H1 (cell line): ENCODE measurements at regions of chr4 and their contacts with region 1.

Region 1: GRCh38 chr4:42519803-42520417 is 122.6 kb downstream of the SHISA3 start:
- DNase-seq: peak in 1 of 2 experiments; percentile 65
- H3K4me3 ChIP-seq: no peak overlapping the region
- H3K27ac ChIP-seq: no peak overlapping the region
- H3K4me1 ChIP-seq: no peaks in the 10 kb centered on the region
- H3K27me3 ChIP-seq: peaks cover 0 to 4% (median under 1%) of the 10 kb centered on the region in 4 experiments; a peak in 2 of 7 replicates
- CTCF ChIP-seq: peak in 2 of 3 experiments; percentile 55 to 61; a peak in 2 of 4 replicates
- EP300 ChIP-seq: no peak
- POLR2A ChIP-seq: no peak
- RAD21 ChIP-seq: peak; percentile 83 to 86

Region 2: DNA sequence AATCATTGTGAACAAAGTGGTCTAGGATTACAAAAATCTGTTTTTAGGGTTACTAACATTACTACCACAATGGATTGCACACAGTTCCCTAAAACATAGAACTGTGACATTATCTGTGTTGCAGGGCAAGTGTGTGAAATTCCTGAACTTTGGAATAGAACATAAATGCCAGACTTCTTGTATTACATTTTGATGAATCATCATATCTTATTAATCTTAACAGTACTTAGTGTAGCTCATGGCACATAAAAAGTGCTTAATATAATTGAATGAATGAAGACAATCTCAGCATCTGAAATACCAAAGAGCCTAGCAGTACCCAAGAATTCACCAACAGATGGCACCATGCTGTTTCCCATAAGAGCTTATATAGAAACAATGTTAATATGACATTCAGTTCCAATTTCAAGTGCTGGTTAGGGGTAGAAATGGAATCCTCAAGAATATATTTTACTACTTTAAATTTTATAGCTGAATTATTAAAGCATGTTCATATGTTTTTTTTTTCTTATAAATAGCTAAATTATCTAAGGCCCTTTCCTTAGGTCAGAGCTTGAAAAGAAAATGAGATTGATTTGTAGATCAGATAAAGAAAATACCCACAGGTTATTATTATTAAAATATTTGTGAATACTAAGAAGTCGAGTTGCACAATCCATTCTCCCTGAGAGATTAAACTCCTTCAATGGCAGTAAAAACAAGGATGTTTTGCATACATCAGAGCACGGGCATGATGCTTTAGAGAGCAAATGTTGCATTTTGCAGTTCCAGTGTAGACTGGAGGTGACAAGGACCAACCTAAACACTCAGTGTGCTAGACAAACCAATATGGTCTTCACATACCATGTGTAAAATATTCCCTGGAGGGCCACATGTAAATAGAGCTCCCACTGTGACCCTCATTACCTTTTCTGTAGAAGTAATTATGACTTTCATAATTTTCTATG is 148.3 kb before region 1 on chr4:
- CTCF ChIA-PET with region 1: interaction called, 82 read pairs
- POLR2A ChIA-PET with region 1: interaction called, 3 read pairs
- DNase-seq: no peak
- H3K4me3 ChIP-seq: no peak overlapping the region
- H3K27ac ChIP-seq: no peak overlapping the region
- H3K4me1 ChIP-seq: no peaks in the 10 kb centered on the region; a peak in 1 of 7 replicates
- H3K27me3 ChIP-seq: 0 out of 7 replicates have a peak, but pooled peaks cover 0 to 2% (median 0%) of the 10 kb centered on the region in 4 experiments
- CTCF ChIP-seq: peak in 2 of 3 experiments; percentile 6 to 40; a peak in 2 of 4 replicates
- EP300 ChIP-seq: no peak
- POLR2A ChIP-seq: no peak
- RAD21 ChIP-seq: peak; percentile 59 to 62

Region 3: GRCh38 chr4:42390622-42391354 is 129.1 kb before region 1 on chr4:
- CTCF ChIA-PET with region 1: interaction called, 135 read pairs
- POLR2A ChIA-PET with region 1: interaction called, 4 read pairs
- DNase-seq: no peak
- H3K4me3 ChIP-seq: no peak overlapping the region
- H3K27ac ChIP-seq: no peak overlapping the region
- H3K4me1 ChIP-seq: peaks cover 0 to 11% (median 4%) of the 10 kb centered on the region in 4 experiments; a peak in 3 of 7 replicates
- H3K27me3 ChIP-seq: peaks cover 4 to 8% (median 6%) of the 10 kb centered on the region in 4 experiments
- CTCF ChIP-seq: no peak
- EP300 ChIP-seq: no peak
- POLR2A ChIP-seq: no peak
- RAD21 ChIP-seq: no peak

Region 4: DNA sequence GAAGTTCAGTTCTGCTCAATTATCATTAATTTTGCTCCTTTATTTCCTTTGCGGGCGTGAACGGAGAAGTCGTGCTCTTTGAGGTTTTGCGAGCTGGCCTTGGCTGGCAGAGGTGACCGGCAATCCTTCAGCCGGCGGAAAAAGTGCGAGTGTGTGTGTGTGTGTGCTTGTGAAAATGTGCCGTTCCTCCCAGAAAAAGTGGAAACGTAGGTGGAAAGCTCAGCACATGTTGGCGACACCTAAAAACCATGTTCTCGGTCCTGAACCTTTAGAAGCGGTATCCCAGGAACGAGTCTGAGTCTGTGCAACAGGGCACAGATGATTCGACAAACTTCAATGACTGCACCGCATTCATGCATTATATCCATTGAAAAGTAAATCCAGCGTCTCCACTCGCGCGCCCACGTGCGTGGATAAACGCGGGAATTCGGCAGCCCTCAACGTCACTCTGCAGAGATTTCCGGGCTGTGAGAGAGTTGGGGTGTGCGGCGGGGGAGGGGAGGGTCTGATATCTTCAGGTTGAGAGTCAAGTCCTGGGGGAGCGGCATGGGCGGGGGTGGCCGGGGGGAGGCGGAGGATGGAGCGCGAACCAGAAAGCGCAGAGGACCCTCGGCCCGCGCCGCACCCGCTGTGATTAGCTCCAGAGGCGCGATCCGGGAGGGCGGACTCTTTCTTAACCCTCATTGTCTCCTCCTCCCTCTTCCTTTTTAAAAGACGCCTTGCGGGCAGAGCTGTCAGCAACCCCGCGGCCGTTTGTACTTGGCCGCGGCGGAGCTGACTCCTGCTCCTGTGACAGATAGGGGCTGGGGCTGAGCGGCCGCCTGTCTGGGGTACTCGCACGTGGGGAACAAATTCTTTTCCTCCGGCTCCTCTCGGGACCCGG is 122.9 kb before region 1 on chr4 and contains the start of gene SHISA3:
- CTCF ChIA-PET with region 1: interaction called, 135 read pairs
- POLR2A ChIA-PET with region 1: interaction called, 3 read pairs
- DNase-seq: peak in 1 of 2 experiments; percentile 75
- H3K4me3 ChIP-seq: peak within 1 kb of the TSS; percentile 45 to 66 (median 58)
- H3K27ac ChIP-seq: no peak within 1 kb of the TSS
- H3K4me1 ChIP-seq: peaks cover 4 to 22% (median 12%) of the 10 kb centered on the region in 4 experiments; a peak in 6 of 7 replicates
- H3K27me3 ChIP-seq: peaks cover 19 to 65% (median 57%) of the 10 kb centered on the region in 4 experiments
- CTCF ChIP-seq: no peak
- EP300 ChIP-seq: no peak
- POLR2A ChIP-seq: no peak
- RAD21 ChIP-seq: no peak
- total RNA-seq, gene SHISA3: 2.0 and 2.2 TPM in 2 replicates

Region 5: GRCh38 chr4:42420140-42420539 is 99.8 kb before region 1 on chr4:
- CTCF ChIA-PET with region 1: interaction called, 22 read pairs
- POLR2A ChIA-PET with region 1: interaction called, 3 read pairs
- DNase-seq: no peak
- H3K4me3 ChIP-seq: no peak overlapping the region
- H3K27ac ChIP-seq: no peak overlapping the region
- H3K4me1 ChIP-seq: peaks cover 0 to 3% (median 0%) of the 10 kb centered on the region in 4 experiments; a peak in 3 of 7 replicates
- H3K27me3 ChIP-seq: no peaks in the 10 kb centered on the region
- CTCF ChIP-seq: peak in 1 of 3 experiments; percentile 4; a peak in 1 of 4 replicates
- EP300 ChIP-seq: no peak
- POLR2A ChIP-seq: no peak
- RAD21 ChIP-seq: peak in 1 of 2 experiments; percentile 26; a peak in 1 of 4 replicates

Region 6: GRCh38 chr4:42501624-42502401 is 18.1 kb before region 1 on chr4:
- CTCF ChIA-PET with region 1: interaction called, 12 read pairs
- POLR2A ChIA-PET with region 1: no interaction called
- DNase-seq: no peak
- H3K4me3 ChIP-seq: no peak overlapping the region
- H3K27ac ChIP-seq: no peak overlapping the region
- H3K4me1 ChIP-seq: peaks cover 0 to 6% (median 4%) of the 10 kb centered on the region in 4 experiments; a peak in 3 of 7 replicates
- H3K27me3 ChIP-seq: no peaks in the 10 kb centered on the region
- CTCF ChIP-seq: no peak
- EP300 ChIP-seq: no peak
- POLR2A ChIP-seq: no peak
- RAD21 ChIP-seq: no peak

Region 7: GRCh38 chr4:42588909-42589308 is 69.0 kb after region 1 on chr4:
- CTCF ChIA-PET with region 1: no interaction called
- POLR2A ChIA-PET with region 1: no interaction called
- DNase-seq: no peak
- H3K4me3 ChIP-seq: no peak overlapping the region
- H3K27ac ChIP-seq: no peak overlapping the region
- H3K4me1 ChIP-seq: no peaks in the 10 kb centered on the region
- H3K27me3 ChIP-seq: no peaks in the 10 kb centered on the region
- CTCF ChIP-seq: no peak
- EP300 ChIP-seq: no peak
- POLR2A ChIP-seq: no peak
- RAD21 ChIP-seq: no peak